Caco-2 (cell line): ENCODE measurements at regions of chr17 and their contacts with region 1.

Region 1: GRCh38 chr17:68733241-68734176 is 132.3 kb upstream of the FAM20A start:
- DNase-seq: peak; percentile 82 to 95
- H3K4me3 ChIP-seq: no peak overlapping the region
- H3K4me3 Mint-ChIP-seq: peak overlapping the region; percentile 45
- H3K27ac Mint-ChIP-seq: peak overlapping the region; percentile 90
- H3K4me1 ChIP-seq: peaks cover 42% of the 10 kb centered on the region
- H3K4me1 Mint-ChIP-seq: peaks cover 38% of the 10 kb centered on the region
- H3K27me3 ChIP-seq: no peaks in the 10 kb centered on the region
- H3K27me3 Mint-ChIP-seq: no peaks in the 10 kb centered on the region
- CTCF ChIP-seq: no peak

Region 2: GRCh38 chr17:68512247-68512982 is 221.1 kb before region 1 on chr17 and contains the start of gene PRKAR1A:
- CTCF ChIA-PET with region 1: interaction called, 3 read pairs
- POLR2A ChIA-PET with region 1: no interaction called
- intact Hi-C with region 1: loop called (anchors 1 kb)
- DNase-seq: peak; percentile 93
- H3K4me3 ChIP-seq: peak within 1 kb of the TSS; percentile 77
- H3K4me3 Mint-ChIP-seq: peak within 1 kb of the TSS; percentile 93
- H3K27ac Mint-ChIP-seq: peak within 1 kb of the TSS; percentile 97
- H3K4me1 ChIP-seq: peaks cover 15% of the 10 kb centered on the region
- H3K4me1 Mint-ChIP-seq: peaks cover 10% of the 10 kb centered on the region
- H3K27me3 ChIP-seq: no peaks in the 10 kb centered on the region
- H3K27me3 Mint-ChIP-seq: no peaks in the 10 kb centered on the region
- CTCF ChIP-seq: no peak
- total RNA-seq, gene PRKAR1A: 160 and 170 TPM in 2 replicates

Region 3: DNA sequence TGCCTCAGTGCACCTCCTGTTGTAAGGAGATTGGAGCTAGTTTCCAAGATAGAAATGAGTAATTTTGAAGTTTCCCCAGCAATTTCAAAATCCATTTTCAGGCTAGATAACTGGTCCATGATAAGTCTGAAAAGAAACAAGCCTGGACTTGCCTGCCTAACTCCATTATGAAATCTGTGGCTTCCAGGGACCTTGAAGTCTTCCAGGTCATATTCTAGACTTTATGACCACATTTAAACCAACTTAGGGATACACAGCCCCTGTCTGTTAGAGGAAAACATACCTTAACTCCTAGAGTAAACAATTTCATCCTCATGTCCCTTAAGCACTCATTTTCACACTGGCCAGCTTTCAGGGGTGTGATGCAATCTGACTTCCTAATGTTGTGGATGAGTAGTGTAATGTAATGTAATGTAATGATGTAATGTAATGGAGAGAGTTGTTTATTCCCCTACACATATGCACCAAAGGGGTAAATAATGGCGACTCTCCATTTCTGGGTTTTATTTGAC is 35.6 kb before region 1 on chr17:
- CTCF ChIA-PET with region 1: interaction called, 5 read pairs
- POLR2A ChIA-PET with region 1: interaction called, 3 read pairs
- intact Hi-C with region 1: loop called (anchors 1 kb)
- DNase-seq: peak; percentile 24 to 56
- H3K4me3 ChIP-seq: no peak overlapping the region
- H3K4me3 Mint-ChIP-seq: no peak overlapping the region
- H3K27ac Mint-ChIP-seq: no peak overlapping the region
- H3K4me1 ChIP-seq: peaks cover 41% of the 10 kb centered on the region
- H3K4me1 Mint-ChIP-seq: peaks cover 22% of the 10 kb centered on the region
- H3K27me3 ChIP-seq: no peaks in the 10 kb centered on the region
- H3K27me3 Mint-ChIP-seq: no peaks in the 10 kb centered on the region
- CTCF ChIP-seq: no peak

Region 4: GRCh38 chr17:68782789-68783188 is 49.3 kb after region 1 on chr17:
- CTCF ChIA-PET with region 1: no interaction called
- POLR2A ChIA-PET with region 1: no interaction called
- intact Hi-C with region 1: no loop called
- DNase-seq: no peak
- H3K4me3 ChIP-seq: no peak overlapping the region
- H3K4me3 Mint-ChIP-seq: no peak overlapping the region
- H3K27ac Mint-ChIP-seq: no peak overlapping the region
- H3K4me1 ChIP-seq: peaks cover 22% of the 10 kb centered on the region
- H3K4me1 Mint-ChIP-seq: no peaks in the 10 kb centered on the region
- H3K27me3 ChIP-seq: no peaks in the 10 kb centered on the region; the same call in 1 of the 2 replicates
- H3K27me3 Mint-ChIP-seq: no peaks in the 10 kb centered on the region
- CTCF ChIP-seq: no peak